ENCODE measurements at regions of chr3 and their contacts with region 1.

Region 1: DNA sequence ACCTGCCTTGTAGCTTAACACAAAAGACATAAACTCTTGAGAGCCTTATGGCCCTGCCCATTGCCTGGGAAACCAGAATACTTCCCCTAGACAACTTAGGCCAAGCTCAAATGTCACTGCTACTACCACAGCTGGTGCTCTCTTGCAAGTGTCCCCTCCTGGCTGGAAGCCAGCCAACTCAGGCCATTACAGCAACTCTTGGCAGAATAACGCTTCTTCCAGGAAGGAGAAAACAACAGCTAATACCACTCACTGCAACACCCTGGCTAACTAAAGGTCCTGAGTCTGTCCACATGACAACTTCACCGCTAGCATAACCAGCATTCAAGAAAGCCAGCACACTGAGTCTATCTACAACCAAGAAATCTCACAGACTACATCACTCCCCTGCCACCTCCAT is 5.1 kb upstream of the B4GALT4 start:
- DNase-seq: no peak
- H3K4me3 Mint-ChIP-seq: no peak overlapping the region
- H3K27ac Mint-ChIP-seq: no peak overlapping the region
- H3K4me1 Mint-ChIP-seq: peaks cover 7% of the 10 kb centered on the region
- H3K27me3 Mint-ChIP-seq: peaks cover 7% of the 10 kb centered on the region

Region 2: DNA sequence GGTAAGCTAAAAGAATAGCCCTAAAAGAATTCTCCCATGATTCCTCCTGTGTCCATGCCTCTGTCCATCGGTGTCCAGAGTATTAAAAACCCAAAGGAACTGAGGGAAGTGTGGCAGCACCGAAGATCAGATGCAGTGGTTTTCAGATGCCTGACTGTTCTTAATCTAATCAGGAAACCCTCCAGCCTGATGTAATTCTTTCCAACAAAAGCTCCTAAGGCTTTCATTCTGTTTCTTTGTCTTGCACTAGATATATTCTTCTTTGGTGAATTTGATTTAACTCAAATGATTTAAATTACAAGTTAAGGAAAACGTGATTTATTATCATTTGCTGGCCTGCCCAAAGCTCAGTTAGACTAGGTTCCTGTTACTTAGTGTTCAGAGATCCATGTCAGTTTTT is 119.6 kb after region 1 on chr3:
- CTCF ChIA-PET with region 1: no interaction called
- POLR2A ChIA-PET with region 1: interaction called, 14 read pairs
- DNase-seq: no peak
- H3K4me3 Mint-ChIP-seq: no peak overlapping the region
- H3K27ac Mint-ChIP-seq: no peak overlapping the region
- H3K4me1 Mint-ChIP-seq: no peaks in the 10 kb centered on the region
- H3K27me3 Mint-ChIP-seq: no peaks in the 10 kb centered on the region

Region 3: DNA sequence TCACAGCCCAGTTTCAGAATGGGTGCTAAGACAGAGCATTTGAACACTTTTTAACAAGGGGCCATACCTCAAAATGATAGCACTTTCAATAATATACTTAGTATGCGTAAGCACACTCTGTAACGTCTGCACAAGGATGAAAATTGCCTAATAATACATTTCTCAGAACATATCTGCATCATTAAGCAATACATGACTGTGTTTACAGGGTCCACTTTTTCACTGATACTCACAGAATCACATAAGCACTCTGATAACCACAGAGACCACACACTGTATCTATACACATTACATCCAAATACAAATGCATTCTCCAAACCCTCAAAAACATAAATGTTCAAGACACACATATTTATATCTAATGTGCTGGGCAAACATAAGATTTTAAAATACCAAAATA is 615.9 kb after region 1 on chr3:
- CTCF ChIA-PET with region 1: no interaction called
- POLR2A ChIA-PET with region 1: no interaction called
- DNase-seq: no peak
- H3K4me3 Mint-ChIP-seq: no peak overlapping the region
- H3K27ac Mint-ChIP-seq: no peak overlapping the region
- H3K4me1 Mint-ChIP-seq: no peaks in the 10 kb centered on the region
- H3K27me3 Mint-ChIP-seq: no peaks in the 10 kb centered on the region

Measured in activated CD4-positive, alpha-beta T cell treated with anti-CD3 and anti-CD28 coated beads, Interleukin-2, amount 10 ng/mL, durations not matched to agents 7 days and 5 days (primary cell).